B cell (primary cell): ENCODE measurements at regions of chr2 and their contacts with region 1.

Region 1: DNA sequence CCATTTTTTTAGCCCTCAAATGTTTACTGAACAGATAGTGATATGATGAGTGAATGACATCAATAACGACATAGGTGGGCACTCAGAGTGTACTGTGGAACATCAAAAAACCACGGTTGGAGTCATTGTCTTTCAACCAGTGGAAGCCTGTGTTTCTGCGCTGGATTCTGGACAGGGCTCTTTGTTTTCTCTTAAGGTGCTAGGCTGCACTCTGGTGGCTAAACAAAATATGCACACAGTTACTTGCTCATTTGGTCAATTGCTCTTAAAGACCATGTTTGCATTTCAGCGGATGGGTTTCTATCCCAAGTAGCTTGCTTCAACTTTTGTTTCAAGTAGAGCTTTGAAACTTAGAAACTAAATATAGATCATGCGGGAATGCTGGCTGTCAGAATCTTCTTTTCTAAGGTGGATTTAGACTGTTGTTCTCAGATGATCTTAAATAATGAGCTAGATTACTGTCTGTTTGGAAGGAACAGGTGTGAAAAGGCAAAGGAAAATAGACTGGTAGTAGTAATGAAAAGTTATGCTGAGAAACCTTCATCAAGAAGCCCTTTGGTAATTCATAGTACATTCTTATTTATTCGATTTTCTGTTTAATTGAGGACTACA is 48.5 kb upstream of the LYPD6B start:
- DNase-seq: peak; percentile 73
- ATAC-seq: peak; percentile 68
- H3K4me3 ChIP-seq: no peak overlapping the region
- H3K4me3 Mint-ChIP-seq: no peak overlapping the region
- H3K27ac ChIP-seq: no peak overlapping the region
- H3K27ac Mint-ChIP-seq: no peak overlapping the region
- H3K4me1 ChIP-seq: no peaks in the 10 kb centered on the region
- H3K4me1 Mint-ChIP-seq: peaks cover 8% of the 10 kb centered on the region
- H3K27me3 ChIP-seq: no peaks in the 10 kb centered on the region
- H3K27me3 Mint-ChIP-seq: no peaks in the 10 kb centered on the region
- CTCF ChIP-seq: peak; percentile 75

Region 2: DNA sequence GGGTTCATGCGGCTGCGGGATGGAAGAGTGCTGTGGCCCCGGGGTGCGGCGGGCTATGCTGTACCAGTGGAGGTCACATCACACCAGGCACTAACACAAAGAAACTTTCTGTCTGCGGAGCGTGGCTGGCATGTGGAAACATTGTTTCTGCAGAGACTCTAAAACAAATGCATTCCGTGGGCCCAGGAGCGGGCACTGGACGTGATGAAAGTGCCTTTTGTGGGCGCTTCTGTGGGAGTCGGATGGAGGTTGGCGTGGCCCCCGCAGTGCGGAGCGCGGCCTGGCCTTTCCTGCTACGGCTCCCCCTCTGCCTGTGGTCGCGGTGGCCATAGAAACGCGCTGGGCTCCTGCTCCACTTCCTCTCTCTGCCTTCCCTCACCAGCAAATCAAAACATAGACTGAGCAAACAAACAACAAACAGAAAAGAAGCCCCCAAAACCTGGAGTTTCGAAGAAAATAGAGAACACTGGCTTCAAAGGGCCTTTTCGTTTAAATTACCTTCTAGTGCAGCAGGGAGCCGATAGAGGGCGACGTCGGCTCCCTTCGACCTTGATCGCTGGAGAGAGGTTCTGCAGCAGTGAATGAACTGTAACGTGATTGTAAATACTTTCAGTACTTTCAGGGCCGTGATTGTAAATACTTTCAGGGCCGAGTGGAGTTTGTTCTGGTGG is 63.6 kb before region 1 on chr2:
- CTCF ChIA-PET with region 1: interaction called, 9 read pairs
- POLR2A ChIA-PET with region 1: no interaction called
- intact Hi-C with region 1: loop called (anchors 2 kb)
- DNase-seq: peak; percentile 67
- ATAC-seq: peak; percentile 81
- H3K4me3 ChIP-seq: peak overlapping the region; percentile 23 to 69 (median 50)
- H3K4me3 Mint-ChIP-seq: peak overlapping the region; percentile 81
- H3K27ac ChIP-seq: peak overlapping the region in 1 of 2 donors; percentile 13
- H3K27ac Mint-ChIP-seq: peak overlapping the region; percentile 62
- H3K4me1 ChIP-seq: peaks cover 7 to 22% of the 10 kb centered on the region in 2 donors
- H3K4me1 Mint-ChIP-seq: peaks cover 18% of the 10 kb centered on the region
- H3K27me3 ChIP-seq: no peaks in the 10 kb centered on the region
- H3K27me3 Mint-ChIP-seq: no peaks in the 10 kb centered on the region
- CTCF ChIP-seq: peak; percentile 80